A549 (cell line): ENCODE measurements at regions of chr1 and their contacts with region 1.

Region 1: GRCh38 chr1:178031856-178032320 is 62.0 kb upstream of the RASAL2 start:
- DNase-seq: peak; percentile 83 to 87
- ATAC-seq: peak; percentile 93 to 98
- H3K4me3 ChIP-seq: no peak overlapping the region
- H3K27ac ChIP-seq: no peak overlapping the region
- H3K4me1 ChIP-seq: peaks cover 4% of the 10 kb centered on the region; the same call in 2 of the 3 replicates
- CTCF ChIP-seq: peak; percentile 89
- EP300 ChIP-seq: no peak
- POLR2A ChIP-seq: no peak
- RAD21 ChIP-seq: peak; percentile 70 to 84

Region 2: DNA sequence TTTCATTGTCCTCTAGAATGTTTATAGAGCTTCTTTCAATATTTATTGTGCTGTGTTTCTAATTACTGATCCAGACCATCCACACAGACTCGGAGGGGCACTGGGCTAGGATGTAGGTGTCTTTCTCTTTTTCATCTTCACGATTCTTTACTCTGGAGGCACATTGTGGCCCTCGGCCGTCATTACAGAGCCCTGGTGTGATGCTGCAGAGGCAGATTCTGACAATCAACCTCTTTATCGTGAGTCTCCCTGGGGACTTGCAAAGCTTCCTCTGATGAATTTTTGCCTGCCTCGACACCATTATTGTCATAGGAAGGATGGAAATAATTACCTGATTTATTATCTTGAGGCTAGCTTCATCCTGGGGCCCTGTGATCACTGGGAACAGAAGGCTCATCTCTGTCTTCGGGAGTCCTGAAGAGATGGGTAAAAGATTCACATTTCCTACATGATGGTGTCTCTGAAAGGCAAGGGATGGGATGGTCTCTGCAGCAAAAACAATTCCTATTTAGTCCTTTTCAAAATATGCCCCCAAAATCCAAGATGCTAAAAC is 151.5 kb before region 1 on chr1:
- CTCF ChIA-PET with region 1: no interaction called
- POLR2A ChIA-PET with region 1: no interaction called
- DNase-seq: no peak
- ATAC-seq: no peak
- H3K4me3 ChIP-seq: no peak overlapping the region
- H3K27ac ChIP-seq: no peak overlapping the region
- H3K4me1 ChIP-seq: no peaks in the 10 kb centered on the region
- CTCF ChIP-seq: no peak
- EP300 ChIP-seq: no peak
- POLR2A ChIP-seq: no peak
- RAD21 ChIP-seq: no peak

Region 3: DNA sequence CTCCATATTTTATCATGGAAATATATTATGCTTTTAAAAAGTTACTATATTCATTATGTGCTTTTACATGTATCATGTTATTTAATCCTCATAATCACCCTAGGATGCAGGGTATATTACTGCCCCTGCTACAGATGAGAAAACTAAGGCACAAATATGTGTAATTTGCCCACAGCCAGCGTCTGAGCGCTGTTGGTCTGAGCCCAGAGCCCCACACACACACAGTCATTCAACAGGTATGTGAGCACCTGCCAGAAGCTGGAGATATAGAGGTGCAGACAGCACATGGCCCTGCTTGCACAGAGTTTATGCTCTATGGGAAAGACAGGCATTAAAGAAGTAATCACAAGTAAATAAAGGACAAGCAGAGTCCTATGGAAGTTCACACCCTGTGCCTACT is 12.3 kb before region 1 on chr1:
- CTCF ChIA-PET with region 1: interaction called, 16 read pairs
- POLR2A ChIA-PET with region 1: no interaction called
- DNase-seq: no peak
- ATAC-seq: no peak
- H3K4me3 ChIP-seq: no peak overlapping the region
- H3K27ac ChIP-seq: no peak overlapping the region
- H3K4me1 ChIP-seq: peaks cover 13% of the 10 kb centered on the region; the same call in 1 of the 3 replicates
- CTCF ChIP-seq: no peak
- EP300 ChIP-seq: no peak
- POLR2A ChIP-seq: no peak
- RAD21 ChIP-seq: no peak

Region 4: GRCh38 chr1:178048426-178048825 is 16.5 kb after region 1 on chr1:
- CTCF ChIA-PET with region 1: interaction called, 24 read pairs
- POLR2A ChIA-PET with region 1: interaction called, 4 read pairs
- DNase-seq: no peak
- ATAC-seq: peak in 1 of 2 experiments; percentile 35; a peak in 2 of 6 replicates
- H3K4me3 ChIP-seq: no peak overlapping the region
- H3K27ac ChIP-seq: peak overlapping the region in 1 of 2 experiments; percentile 51; a peak in 3 of 6 replicates
- H3K4me1 ChIP-seq: peaks cover 39% of the 10 kb centered on the region
- CTCF ChIP-seq: no peak
- EP300 ChIP-seq: no peak
- POLR2A ChIP-seq: no peak
- RAD21 ChIP-seq: no peak

Region 5: GRCh38 chr1:178055779-178056471 is 24.0 kb after region 1 on chr1:
- CTCF ChIA-PET with region 1: interaction called, 24 read pairs
- POLR2A ChIA-PET with region 1: interaction called, 4 read pairs
- DNase-seq: peak; percentile 66 to 81
- ATAC-seq: peak; percentile 88 to 93
- H3K4me3 ChIP-seq: no peak overlapping the region
- H3K27ac ChIP-seq: peak overlapping the region; percentile 58 to 84
- H3K4me1 ChIP-seq: peaks cover 53% of the 10 kb centered on the region
- CTCF ChIP-seq: peak; percentile 47
- EP300 ChIP-seq: no peak
- POLR2A ChIP-seq: no peak
- RAD21 ChIP-seq: peak; percentile 32 to 43

Region 6: DNA sequence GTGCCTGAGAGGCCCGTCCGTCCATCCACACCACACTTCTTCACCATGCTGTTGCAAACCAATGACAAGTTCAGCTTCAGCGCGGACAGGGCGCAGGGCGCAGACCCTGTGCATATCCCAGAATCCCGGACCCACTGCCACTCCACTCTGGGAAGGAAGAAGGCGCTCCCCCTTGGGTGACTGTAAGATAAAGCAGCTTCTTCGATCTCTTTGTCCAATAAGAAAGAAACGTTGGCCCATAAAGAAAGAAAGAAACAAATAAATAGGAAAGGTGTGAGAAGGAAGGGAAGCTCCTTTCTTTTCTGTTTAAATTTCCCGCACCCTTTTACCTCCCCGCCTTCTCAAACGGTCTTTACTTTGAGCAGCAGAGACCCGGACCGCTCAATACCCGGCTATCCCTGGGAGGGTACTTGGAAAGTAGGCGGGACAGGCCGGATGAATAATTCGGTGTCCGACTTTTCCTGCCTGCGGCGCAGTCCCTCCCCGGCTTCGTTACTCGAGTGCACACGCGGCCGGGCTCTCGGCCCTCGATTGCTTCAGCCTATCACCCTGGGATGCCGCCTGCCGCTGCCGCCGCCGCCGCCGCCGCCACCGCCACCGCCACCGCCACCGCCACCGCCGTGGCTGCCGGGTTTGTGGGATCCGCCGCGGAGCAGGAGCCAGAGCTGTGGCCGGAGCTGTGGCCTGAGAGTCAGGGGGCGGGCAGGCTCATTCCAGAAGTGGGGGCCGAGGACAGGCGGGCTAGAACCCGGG is 61.5 kb after region 1 on chr1:
- CTCF ChIA-PET with region 1: interaction called, 16 read pairs
- POLR2A ChIA-PET with region 1: interaction called, 8 read pairs
- DNase-seq: peak; percentile 96 to 98
- ATAC-seq: peak; percentile 78 to 88
- H3K4me3 ChIP-seq: peak overlapping the region; percentile 90
- H3K27ac ChIP-seq: peak overlapping the region; percentile 85 to 97
- H3K4me1 ChIP-seq: peaks cover 46% of the 10 kb centered on the region
- CTCF ChIP-seq: peak; percentile 14; the same call in 1 of the 3 replicates
- EP300 ChIP-seq: no peak
- POLR2A ChIP-seq: peak; percentile 37
- RAD21 ChIP-seq: no peak; a peak in 1 of 5 replicates

Region 7: GRCh38 chr1:178282949-178283367 is 251.1 kb after region 1 on chr1:
- CTCF ChIA-PET with region 1: interaction called, 41 read pairs
- POLR2A ChIA-PET with region 1: no interaction called
- DNase-seq: peak; percentile 40 to 71
- ATAC-seq: peak; percentile 82 to 86; a peak in 5 of 6 replicates
- H3K4me3 ChIP-seq: no peak overlapping the region
- H3K27ac ChIP-seq: no peak overlapping the region
- H3K4me1 ChIP-seq: peaks cover 13% of the 10 kb centered on the region; the same call in 2 of the 3 replicates
- CTCF ChIP-seq: peak; percentile 86
- EP300 ChIP-seq: no peak
- POLR2A ChIP-seq: no peak
- RAD21 ChIP-seq: peak; percentile 78 to 89

Region 8: DNA sequence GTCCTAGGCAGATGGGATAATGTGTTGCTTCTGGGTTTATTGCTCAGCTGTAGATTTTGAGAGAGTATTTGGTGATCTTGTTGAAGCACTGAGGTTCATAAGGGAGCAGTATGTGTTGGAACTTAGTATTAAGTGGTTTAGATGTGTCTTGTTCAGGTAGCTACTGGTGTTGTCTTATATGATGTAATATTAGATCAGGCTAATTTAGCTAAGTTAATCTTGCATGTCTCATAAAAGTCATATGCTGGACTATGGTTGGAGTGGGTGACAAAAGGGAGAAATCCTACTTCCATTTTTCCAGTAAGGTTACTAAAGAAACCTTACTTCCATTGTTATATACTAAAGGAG is 268.4 kb after region 1 on chr1:
- CTCF ChIA-PET with region 1: interaction called, 14 read pairs
- POLR2A ChIA-PET with region 1: no interaction called
- DNase-seq: no peak
- ATAC-seq: no peak; a peak in 1 of 6 replicates
- H3K4me3 ChIP-seq: no peak overlapping the region
- H3K27ac ChIP-seq: 0 out of 6 replicates have a peak overlapping the region, but pooled peaks of 1 of the 2 experiments have one; percentile 8
- H3K4me1 ChIP-seq: 0 out of 3 replicates have a peak, but pooled peaks cover 3% of the 10 kb centered on the region
- CTCF ChIP-seq: no peak
- EP300 ChIP-seq: no peak
- POLR2A ChIP-seq: no peak
- RAD21 ChIP-seq: no peak